ENCODE measurements at regions of chr11 and their contacts with region 1.

Region 1: GRCh38 chr11:21704539-21704938 is 488.3 kb upstream of the ANO5 start:
- DNase-seq: no peak
- H3K4me3 ChIP-seq: no peak overlapping the region
- H3K27ac ChIP-seq: no peak overlapping the region
- H3K4me1 ChIP-seq: no peaks in the 10 kb centered on the region
- H3K27me3 ChIP-seq: no peaks in the 10 kb centered on the region
- CTCF ChIP-seq: no peak
- POLR2A ChIP-seq: no peak

Region 2: DNA sequence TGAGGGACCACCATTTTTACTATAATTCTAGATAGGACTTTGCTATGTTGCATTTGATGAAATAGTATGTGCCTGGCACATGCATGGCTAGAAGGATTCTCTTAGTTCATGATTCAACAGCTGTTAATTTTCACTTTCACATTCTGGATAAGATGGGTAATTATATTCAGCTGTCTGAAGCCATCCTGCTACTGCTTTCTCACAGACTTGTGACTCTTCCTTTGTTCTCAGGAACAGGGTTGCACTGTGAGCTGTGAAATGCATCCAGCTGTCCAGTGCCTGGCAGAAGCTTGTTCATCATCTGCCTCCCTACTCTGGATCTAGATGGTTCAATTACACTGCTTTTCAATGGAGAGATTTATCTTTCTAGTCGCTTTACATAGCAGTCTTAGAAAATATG is 121.7 kb before region 1 on chr11:
- intact Hi-C with region 1: no loop called
- DNase-seq: no peak
- H3K4me3 ChIP-seq: no peak overlapping the region
- H3K27ac ChIP-seq: no peak overlapping the region
- H3K4me1 ChIP-seq: no peaks in the 10 kb centered on the region
- H3K27me3 ChIP-seq: no peaks in the 10 kb centered on the region
- CTCF ChIP-seq: no peak
- POLR2A ChIP-seq: no peak

Region 3: DNA sequence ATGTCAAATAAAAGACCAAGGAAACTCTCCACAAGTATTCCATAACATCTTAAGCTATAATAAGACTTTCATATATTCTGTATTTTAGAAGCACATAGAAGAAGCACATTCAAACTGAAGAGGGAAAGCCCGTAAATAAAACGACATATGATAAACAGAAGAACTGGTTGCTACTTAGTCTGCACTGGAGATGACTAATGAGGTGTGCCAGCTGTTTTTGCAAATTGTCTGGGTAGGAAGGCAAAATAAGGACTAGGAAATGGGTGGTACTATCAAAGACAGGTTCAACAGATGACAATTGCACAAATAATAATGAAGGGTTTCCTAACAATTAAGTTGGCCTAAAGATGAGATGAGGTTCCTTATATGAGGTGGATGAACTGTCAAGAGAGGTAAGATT is 1749.0 kb after region 1 on chr11:
- intact Hi-C with region 1: loop called (anchors 10 kb)
- DNase-seq: no peak
- H3K4me3 ChIP-seq: no peak overlapping the region
- H3K27ac ChIP-seq: no peak overlapping the region
- H3K4me1 ChIP-seq: no peaks in the 10 kb centered on the region
- H3K27me3 ChIP-seq: no peaks in the 10 kb centered on the region
- CTCF ChIP-seq: no peak
- POLR2A ChIP-seq: no peak

Measured in uterus (tissue), 4 donors.